Cardiac septum (tissue), 1 donor: ENCODE measurements at regions of chr3 and their contacts with region 1.

Region 1: GRCh38 chr3:146072824-146073223 is 88.2 kb downstream of the PLOD2 start:
- DNase-seq: no peak

Region 2: GRCh38 chr3:146160964-146161662 is 88.3 kb after region 1 on chr3 and contains the start of gene PLOD2:
- intact Hi-C with region 1: loop called (anchors 5 kb)
- DNase-seq: peak; percentile 90
- total RNA-seq, gene PLOD2: 27.3 TPM